IMR-90 (cell line): ENCODE measurements at regions of chrX and their contacts with region 1.

Region 1: DNA sequence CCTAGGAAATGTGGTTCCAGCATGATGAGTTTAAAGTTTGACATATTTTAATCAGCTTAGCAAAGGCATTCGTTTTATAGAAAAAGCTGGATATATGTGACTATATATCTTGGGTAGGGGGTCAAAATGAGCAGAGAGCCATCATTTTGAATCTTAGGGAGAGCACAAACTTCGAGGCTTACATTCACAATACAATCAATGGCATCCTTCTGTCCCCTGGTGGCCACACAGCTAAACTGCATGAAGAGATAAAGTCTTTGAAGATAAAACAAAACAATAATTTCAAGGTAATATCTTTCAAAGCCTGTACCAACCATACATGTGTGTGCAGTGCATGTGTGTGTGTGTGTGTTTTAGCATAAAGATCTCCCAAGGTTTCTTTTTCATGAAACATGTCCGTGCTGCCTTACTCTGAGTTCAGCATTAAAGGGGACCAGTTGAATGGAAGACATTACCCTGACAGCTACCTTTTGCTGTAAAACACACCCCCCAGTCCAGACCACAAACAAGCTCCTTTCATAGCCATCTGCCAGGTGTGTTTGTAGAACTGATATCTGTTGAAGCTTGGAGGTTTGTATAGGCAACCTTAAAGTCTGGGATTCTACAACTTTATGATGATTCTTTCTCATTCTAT is 22.0 kb downstream of the DYNLT3 start:
- DNase-seq: peak; percentile 38
- ATAC-seq: peak; percentile 86
- H3K4me3 ChIP-seq: no peak overlapping the region
- H3K27ac ChIP-seq: no peak overlapping the region
- H3K4me1 ChIP-seq: peaks cover 1% of the 10 kb centered on the region; the same call in 1 of the 2 replicates
- H3K27me3 ChIP-seq: peaks cover 5% of the 10 kb centered on the region; the same call in 1 of the 2 replicates
- CTCF ChIP-seq: peak; percentile 80
- POLR2A ChIP-seq: no peak
- RAD21 ChIP-seq: peak; percentile 69

Region 2: DNA sequence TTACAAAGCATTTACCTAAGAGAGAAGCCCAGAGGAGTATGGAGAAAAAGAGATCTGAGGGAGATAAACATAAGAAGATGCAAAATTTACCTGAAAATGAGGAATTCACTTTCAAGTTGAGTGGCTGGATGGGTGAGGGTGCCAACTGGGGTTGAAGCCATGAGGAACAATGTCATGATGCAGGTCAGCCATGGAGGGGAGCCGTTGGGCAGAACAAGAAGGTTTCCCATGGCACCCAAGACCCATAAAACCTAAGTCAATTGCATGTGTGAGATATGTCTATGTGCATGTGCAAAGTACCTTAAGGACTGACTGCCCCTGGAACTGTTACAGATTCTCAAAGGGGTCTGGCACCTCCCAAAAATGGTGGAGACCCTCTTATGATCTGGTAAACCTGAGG is 522.8 kb before region 1 on chrX:
- CTCF ChIA-PET with region 1: no interaction called
- POLR2A ChIA-PET with region 1: no interaction called
- dilution Hi-C with region 1: no loop called
- in situ Hi-C with region 1: no loop called
- intact Hi-C with region 1: loop called (anchors 1 kb)
- DNase-seq: peak; percentile 21
- ATAC-seq: peak; percentile 79
- H3K4me3 ChIP-seq: no peak overlapping the region
- H3K27ac ChIP-seq: no peak overlapping the region
- H3K4me1 ChIP-seq: no peaks in the 10 kb centered on the region
- H3K27me3 ChIP-seq: peaks cover 2% of the 10 kb centered on the region; the same call in 1 of the 2 replicates
- CTCF ChIP-seq: peak; percentile 45
- POLR2A ChIP-seq: no peak
- RAD21 ChIP-seq: peak; percentile 56

Region 3: GRCh38 chrX:37509349-37509748 is 316.0 kb before region 1 on chrX:
- CTCF ChIA-PET with region 1: no interaction called
- POLR2A ChIA-PET with region 1: no interaction called
- dilution Hi-C with region 1: no loop called
- in situ Hi-C with region 1: no loop called
- intact Hi-C with region 1: loop called (anchors 10 kb)
- DNase-seq: no peak
- ATAC-seq: peak; percentile 54; the same call in 1 of the 2 replicates
- H3K4me3 ChIP-seq: no peak overlapping the region
- H3K27ac ChIP-seq: no peak overlapping the region
- H3K4me1 ChIP-seq: no peaks in the 10 kb centered on the region
- H3K27me3 ChIP-seq: no peaks in the 10 kb centered on the region; the same call in none of the 2 replicates
- CTCF ChIP-seq: peak; percentile 29
- POLR2A ChIP-seq: no peak
- RAD21 ChIP-seq: peak; percentile 14; the same call in 1 of the 2 replicates

Region 4: GRCh38 chrX:38103857-38104812 is 278.8 kb after region 1 on chrX:
- CTCF ChIA-PET with region 1: no interaction called
- POLR2A ChIA-PET with region 1: no interaction called
- dilution Hi-C with region 1: no loop called
- in situ Hi-C with region 1: no loop called
- intact Hi-C with region 1: no loop called
- DNase-seq: no peak
- ATAC-seq: no peak
- H3K4me3 ChIP-seq: no peak overlapping the region
- H3K27ac ChIP-seq: no peak overlapping the region
- H3K4me1 ChIP-seq: no peaks in the 10 kb centered on the region
- H3K27me3 ChIP-seq: no peaks in the 10 kb centered on the region
- CTCF ChIP-seq: no peak
- POLR2A ChIP-seq: no peak
- RAD21 ChIP-seq: no peak

Region 5: GRCh38 chrX:38175140-38175539 is 349.8 kb after region 1 on chrX:
- CTCF ChIA-PET with region 1: no interaction called
- POLR2A ChIA-PET with region 1: no interaction called
- dilution Hi-C with region 1: no loop called
- in situ Hi-C with region 1: no loop called
- intact Hi-C with region 1: loop called (anchors 10 kb)
- DNase-seq: peak; percentile 28
- ATAC-seq: peak; percentile 48; the same call in 1 of the 2 replicates
- H3K4me3 ChIP-seq: no peak overlapping the region
- H3K27ac ChIP-seq: no peak overlapping the region
- H3K4me1 ChIP-seq: no peaks in the 10 kb centered on the region
- H3K27me3 ChIP-seq: peaks cover 1% of the 10 kb centered on the region; the same call in 1 of the 2 replicates
- CTCF ChIP-seq: peak; percentile 53
- POLR2A ChIP-seq: no peak
- RAD21 ChIP-seq: peak; percentile 74

Region 6: GRCh38 chrX:38473701-38474100 is 648.4 kb after region 1 on chrX:
- CTCF ChIA-PET with region 1: no interaction called
- POLR2A ChIA-PET with region 1: no interaction called
- dilution Hi-C with region 1: no loop called
- in situ Hi-C with region 1: no loop called
- intact Hi-C with region 1: no loop called
- DNase-seq: no peak
- ATAC-seq: no peak
- H3K4me3 ChIP-seq: no peak overlapping the region
- H3K27ac ChIP-seq: no peak overlapping the region
- H3K4me1 ChIP-seq: no peaks in the 10 kb centered on the region
- H3K27me3 ChIP-seq: no peaks in the 10 kb centered on the region
- CTCF ChIP-seq: no peak
- POLR2A ChIP-seq: no peak
- RAD21 ChIP-seq: no peak